ENCODE measurements at regions of chr16 and their contacts with region 1.

Region 1: GRCh38 chr16:71883849-71884638 is at the start of gene ZNF821:
- DNase-seq: no peak
- ATAC-seq: peak; percentile 64
- H3K4me3 ChIP-seq: peak within 1 kb of the TSS; percentile 92
- H3K27ac ChIP-seq: peak within 1 kb of the TSS; percentile 71
- H3K4me1 ChIP-seq: peaks cover 12% of the 10 kb centered on the region
- H3K27me3 ChIP-seq: no peaks in the 10 kb centered on the region
- CTCF ChIP-seq: peak in 2 of 3 experiments; percentile 30 to 49; a peak in 2 of 6 replicates
- EP300 ChIP-seq: no peak
- POLR2A ChIP-seq: 0 out of 2 replicates have a peak, but pooled peaks have one; percentile 30
- RAD21 ChIP-seq: no peak
- polyA plus RNA-seq, gene ZNF821: 0.82 to 2.0 TPM

Region 2: DNA sequence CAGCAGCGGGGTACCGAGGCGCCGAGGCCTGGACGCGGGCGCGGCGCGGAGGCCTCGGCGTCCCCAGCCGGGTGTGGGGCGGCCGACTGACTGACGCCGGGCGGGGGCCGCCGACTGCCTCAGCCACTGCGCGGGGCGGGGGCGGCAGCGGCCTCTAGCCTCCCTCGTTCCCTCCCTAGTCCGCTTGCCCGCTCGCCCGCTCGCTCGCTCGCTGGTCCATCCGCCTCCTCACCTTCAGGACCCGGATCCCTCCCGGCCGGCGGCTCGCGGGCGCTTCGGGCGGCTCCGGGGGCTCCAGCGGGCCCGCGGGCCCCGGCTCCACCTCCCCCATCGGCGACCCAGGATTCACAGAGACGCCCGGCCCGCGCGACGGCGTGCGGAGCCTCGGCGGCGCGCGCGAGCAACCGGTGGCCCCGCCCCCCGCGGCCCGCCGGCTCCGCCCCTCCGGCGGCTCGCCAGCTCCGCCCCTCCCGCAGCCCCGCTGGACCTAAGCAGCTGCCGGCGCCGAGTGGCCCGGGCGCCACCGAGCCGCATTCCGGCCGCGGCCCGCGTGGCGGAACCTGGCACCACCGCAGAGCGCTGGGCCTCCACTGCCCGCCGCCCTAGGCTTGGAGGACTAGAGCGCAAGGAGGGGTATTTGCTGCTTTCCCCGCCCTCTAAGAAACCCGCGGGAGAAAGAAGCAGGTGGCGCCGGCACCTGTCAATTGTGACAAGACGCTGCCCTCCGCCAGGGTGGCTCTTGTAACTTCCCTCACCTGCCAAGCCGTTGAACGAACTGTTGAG is 160.3 kb before region 1 on chr16:
- CTCF ChIA-PET with region 1: interaction called, 5 read pairs
- POLR2A ChIA-PET with region 1: interaction called, 3 read pairs
- RAD21 ChIA-PET with region 1: interaction called, 5 read pairs
- SMC1A ChIA-PET with region 1: interaction called, 3 read pairs
- in situ Hi-C with region 1: no loop called
- intact Hi-C with region 1: loop called (anchors 1 kb)
- DNase-seq: no peak
- ATAC-seq: peak; percentile 83
- H3K4me3 ChIP-seq: peak overlapping the region; percentile 81
- H3K27ac ChIP-seq: peak overlapping the region; percentile 58
- H3K4me1 ChIP-seq: peaks cover 14% of the 10 kb centered on the region
- H3K27me3 ChIP-seq: no peaks in the 10 kb centered on the region
- CTCF ChIP-seq: no peak
- EP300 ChIP-seq: no peak
- POLR2A ChIP-seq: peak; percentile 57; the same call in 1 of the 2 replicates
- RAD21 ChIP-seq: no peak

Region 3: DNA sequence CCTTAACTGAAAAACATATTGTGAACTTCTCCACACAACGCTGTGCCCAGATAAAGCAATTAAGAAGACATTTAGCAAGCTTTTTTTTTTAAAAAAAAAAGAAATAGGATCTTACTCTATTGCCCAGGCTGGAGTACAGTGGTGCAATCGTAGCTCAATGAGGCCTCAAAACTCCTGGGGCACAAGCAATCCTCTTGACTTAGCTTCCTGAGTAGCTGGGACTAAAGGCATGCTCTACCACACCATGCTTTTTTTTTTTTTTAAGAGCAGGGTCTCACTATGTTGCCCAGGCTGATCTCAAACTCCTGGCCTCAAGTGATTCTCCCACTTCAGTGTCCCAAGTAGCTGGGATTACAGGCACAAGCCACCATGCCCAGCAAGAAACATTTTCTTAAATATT is 95.5 kb before region 1 on chr16:
- CTCF ChIA-PET with region 1: interaction called, 10 read pairs
- POLR2A ChIA-PET with region 1: no interaction called
- RAD21 ChIA-PET with region 1: interaction called, 3 read pairs
- SMC1A ChIA-PET with region 1: interaction called, 10 read pairs
- in situ Hi-C with region 1: no loop called
- intact Hi-C with region 1: no loop called
- DNase-seq: no peak
- ATAC-seq: no peak
- H3K4me3 ChIP-seq: no peak overlapping the region
- H3K27ac ChIP-seq: no peak overlapping the region
- H3K4me1 ChIP-seq: peaks cover 3% of the 10 kb centered on the region; the same call in 1 of the 2 replicates
- H3K27me3 ChIP-seq: no peaks in the 10 kb centered on the region
- CTCF ChIP-seq: no peak
- EP300 ChIP-seq: no peak
- POLR2A ChIP-seq: no peak
- RAD21 ChIP-seq: no peak

Region 4: GRCh38 chr16:71826533-71827017 is 57.5 kb before region 1 on chr16:
- CTCF ChIA-PET with region 1: interaction called, 10 read pairs
- POLR2A ChIA-PET with region 1: interaction called, 4 read pairs
- RAD21 ChIA-PET with region 1: no interaction called
- SMC1A ChIA-PET with region 1: interaction called, 3 read pairs
- in situ Hi-C with region 1: no loop called
- intact Hi-C with region 1: no loop called
- DNase-seq: no peak
- ATAC-seq: no peak
- H3K4me3 ChIP-seq: no peak overlapping the region
- H3K27ac ChIP-seq: no peak overlapping the region
- H3K4me1 ChIP-seq: no peaks in the 10 kb centered on the region
- H3K27me3 ChIP-seq: no peaks in the 10 kb centered on the region
- CTCF ChIP-seq: no peak
- EP300 ChIP-seq: no peak
- POLR2A ChIP-seq: no peak
- RAD21 ChIP-seq: no peak

Region 5: GRCh38 chr16:71870818-71871217 is 13.2 kb before region 1 on chr16:
- CTCF ChIA-PET with region 1: interaction called, 38 read pairs
- POLR2A ChIA-PET with region 1: interaction called, 5 read pairs
- RAD21 ChIA-PET with region 1: interaction called, 4 read pairs
- SMC1A ChIA-PET with region 1: interaction called, 30 read pairs
- in situ Hi-C with region 1: no loop called
- intact Hi-C with region 1: no loop called
- DNase-seq: no peak
- ATAC-seq: peak; percentile 44
- H3K4me3 ChIP-seq: no peak overlapping the region
- H3K27ac ChIP-seq: no peak overlapping the region
- H3K4me1 ChIP-seq: peaks cover 14% of the 10 kb centered on the region
- H3K27me3 ChIP-seq: no peaks in the 10 kb centered on the region
- CTCF ChIP-seq: no peak
- EP300 ChIP-seq: no peak
- POLR2A ChIP-seq: no peak
- RAD21 ChIP-seq: no peak

Region 6: DNA sequence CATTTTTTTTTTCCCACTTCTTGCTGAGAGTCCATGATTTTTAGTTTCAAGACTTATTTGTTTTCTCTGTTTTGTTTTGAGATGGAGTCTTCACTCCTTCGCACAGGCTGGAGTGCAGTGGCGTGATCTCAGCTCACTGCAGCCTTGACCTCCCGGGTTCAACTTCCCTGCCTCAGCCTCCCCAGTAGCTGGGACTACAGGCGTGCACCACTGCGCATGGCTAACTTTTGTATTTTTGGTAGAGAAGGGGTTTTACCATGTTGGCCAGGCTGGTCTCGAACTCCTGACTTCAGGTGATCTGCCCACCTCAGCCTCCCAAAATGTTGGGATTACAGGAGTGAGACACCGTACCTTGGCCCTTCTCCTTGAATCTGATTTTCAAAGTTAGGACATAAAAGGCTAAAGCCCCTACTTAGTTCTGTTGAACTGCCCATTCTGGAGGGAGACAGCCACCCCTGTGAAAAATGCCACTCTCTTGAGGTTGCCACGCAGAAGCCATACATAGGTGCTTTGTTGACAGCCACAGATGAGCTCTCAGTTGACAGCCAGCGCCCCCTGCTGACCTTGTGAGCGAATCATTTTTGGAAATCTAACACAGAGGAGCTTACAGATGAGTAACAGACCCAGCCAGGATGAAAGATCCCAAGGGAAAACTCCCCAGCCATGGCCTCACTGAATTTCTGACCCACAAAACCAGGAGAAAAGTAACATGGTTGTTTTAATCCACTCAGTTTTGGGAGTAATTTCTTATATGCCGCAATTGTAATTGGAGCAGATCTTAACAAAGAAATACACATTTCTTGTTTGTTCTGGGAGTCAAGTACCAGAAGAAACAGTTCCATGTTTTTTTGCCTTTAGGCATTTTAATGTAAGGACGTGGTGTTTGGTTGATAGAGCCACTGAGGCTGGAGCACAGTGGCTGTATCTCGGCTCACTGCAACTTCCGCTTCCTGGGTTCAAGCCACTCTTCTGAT is 77.3 kb after region 1 on chr16:
- CTCF ChIA-PET with region 1: interaction called, 29 read pairs
- POLR2A ChIA-PET with region 1: interaction called, 4 read pairs
- RAD21 ChIA-PET with region 1: interaction called, 29 read pairs
- SMC1A ChIA-PET with region 1: interaction called, 15 read pairs
- in situ Hi-C with region 1: no loop called
- intact Hi-C with region 1: loop called (anchors 1 kb)
- DNase-seq: peak; percentile 52
- ATAC-seq: peak; percentile 96
- H3K4me3 ChIP-seq: no peak overlapping the region
- H3K27ac ChIP-seq: no peak overlapping the region
- H3K4me1 ChIP-seq: peaks cover 9% of the 10 kb centered on the region
- H3K27me3 ChIP-seq: no peaks in the 10 kb centered on the region; a peak in 1 of 4 replicates
- CTCF ChIP-seq: peak; percentile 82 to 96 (median 87)
- EP300 ChIP-seq: no peak
- POLR2A ChIP-seq: no peak
- RAD21 ChIP-seq: peak; percentile 94

Region 7: DNA sequence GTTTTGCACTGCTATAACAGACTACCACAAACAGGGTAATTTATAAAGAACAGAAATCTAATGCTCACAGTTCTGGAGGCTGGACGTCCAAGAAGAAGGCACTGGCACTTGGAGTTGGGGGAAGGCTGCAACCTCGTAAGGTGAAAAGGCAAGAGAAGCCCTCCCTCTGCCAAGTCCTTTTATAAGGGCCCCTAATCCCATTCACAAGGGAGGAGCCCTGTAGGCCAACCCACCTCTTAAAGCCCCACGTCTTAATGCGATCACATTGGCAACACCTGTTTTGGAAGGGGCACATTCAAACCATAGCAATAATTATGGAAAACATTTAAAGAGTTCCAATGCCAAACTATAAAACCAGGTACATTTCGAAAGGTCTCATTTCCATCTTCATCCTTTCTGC is 111.0 kb after region 1 on chr16:
- CTCF ChIA-PET with region 1: no interaction called
- POLR2A ChIA-PET with region 1: no interaction called
- RAD21 ChIA-PET with region 1: no interaction called
- SMC1A ChIA-PET with region 1: no interaction called
- in situ Hi-C with region 1: no loop called
- intact Hi-C with region 1: no loop called
- DNase-seq: no peak
- ATAC-seq: no peak
- H3K4me3 ChIP-seq: no peak overlapping the region
- H3K27ac ChIP-seq: no peak overlapping the region
- H3K4me1 ChIP-seq: no peaks in the 10 kb centered on the region
- H3K27me3 ChIP-seq: no peaks in the 10 kb centered on the region
- CTCF ChIP-seq: no peak
- EP300 ChIP-seq: no peak
- POLR2A ChIP-seq: no peak
- RAD21 ChIP-seq: no peak

Measured in GM12878 (cell line).